HEK293 (cell line): ENCODE measurements at regions of chr19 and their contacts with region 1.

Region 1: GRCh38 chr19:33416307-33417215 is 43.1 kb downstream of the CEBPG start:
- H3K4me3 ChIP-seq: no peak overlapping the region
- H3K27ac ChIP-seq: peak overlapping the region; percentile 49; the same call in 1 of the 2 replicates
- H3K4me1 ChIP-seq: peaks cover 7% of the 10 kb centered on the region
- CTCF ChIP-seq: peak; percentile 98

Region 2: GRCh38 chr19:33332248-33332647 is 84.3 kb before region 1 on chr19:
- CTCF ChIA-PET with region 1: no interaction called
- POLR2A ChIA-PET with region 1: no interaction called
- H3K4me3 ChIP-seq: no peak overlapping the region
- H3K27ac ChIP-seq: peak overlapping the region; percentile 16; the same call in 1 of the 2 replicates
- H3K4me1 ChIP-seq: no peaks in the 10 kb centered on the region
- CTCF ChIP-seq: no peak

Region 3: GRCh38 chr19:33447336-33448158 is 31.0 kb after region 1 on chr19:
- CTCF ChIA-PET with region 1: interaction called, 13 read pairs
- POLR2A ChIA-PET with region 1: no interaction called
- H3K4me3 ChIP-seq: no peak overlapping the region
- H3K27ac ChIP-seq: no peak overlapping the region
- H3K4me1 ChIP-seq: no peaks in the 10 kb centered on the region
- CTCF ChIP-seq: no peak

Region 4: DNA sequence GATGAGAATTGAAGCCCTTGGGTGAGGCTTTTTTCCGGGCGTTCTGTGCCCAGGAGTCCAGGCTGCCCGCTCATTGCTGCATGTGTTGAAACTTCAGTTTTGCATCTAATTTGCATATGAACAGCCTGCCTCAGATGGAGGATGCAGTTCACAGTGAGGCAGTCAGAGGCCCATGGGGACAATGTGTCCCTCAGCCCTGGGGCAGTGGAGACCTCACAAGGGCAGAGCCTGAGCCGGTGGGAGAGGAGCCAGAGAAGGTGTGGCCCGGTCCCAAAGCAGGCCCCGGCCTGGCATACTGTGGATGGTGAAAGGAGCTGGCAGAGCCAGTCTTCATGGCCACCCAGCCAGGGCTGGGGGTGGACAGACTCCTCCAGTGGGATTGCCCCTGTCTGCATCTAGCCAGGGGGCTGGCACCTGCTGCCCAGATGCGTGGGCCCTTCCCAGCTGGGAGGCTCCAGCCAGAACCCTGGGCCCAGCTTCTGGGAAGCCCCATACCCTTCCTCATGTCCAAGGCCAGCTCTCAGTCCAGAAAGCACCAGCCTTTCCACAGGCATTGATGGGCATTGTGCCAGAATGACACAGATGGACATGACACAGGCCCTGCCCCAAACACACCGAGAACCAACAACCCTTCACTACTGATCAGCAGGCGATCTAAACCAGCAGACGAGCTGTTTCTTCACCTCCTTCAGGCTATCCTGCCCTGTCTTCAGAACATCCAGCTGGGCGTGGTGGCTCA is 347.2 kb after region 1 on chr19:
- CTCF ChIA-PET with region 1: interaction called, 272 read pairs
- POLR2A ChIA-PET with region 1: no interaction called
- H3K4me3 ChIP-seq: no peak overlapping the region
- H3K27ac ChIP-seq: no peak overlapping the region
- H3K4me1 ChIP-seq: no peaks in the 10 kb centered on the region
- CTCF ChIP-seq: no peak